Breast epithelium (tissue), 4 donors: ENCODE measurements at regions of chr20 and their contacts with region 1.

Region 1: GRCh38 chr20:56925082-56925830 is 296.1 kb downstream of the TFAP2C start:
- DNase-seq: no peak
- H3K4me3 ChIP-seq: peak overlapping the region in 2 of 3 donors; percentile 51 to 59
- H3K27ac ChIP-seq: no peak overlapping the region
- H3K4me1 ChIP-seq: no peaks in the 10 kb centered on the region
- H3K27me3 ChIP-seq: peaks cover 0 to 54% of the 10 kb centered on the region in 2 donors
- CTCF ChIP-seq: no peak
- POLR2A ChIP-seq: no peak

Region 2: GRCh38 chr20:56909918-56910714 is 15.1 kb before region 1 on chr20:
- intact Hi-C with region 1: no loop called
- DNase-seq: no peak
- H3K4me3 ChIP-seq: no peak overlapping the region
- H3K27ac ChIP-seq: no peak overlapping the region
- H3K4me1 ChIP-seq: no peaks in the 10 kb centered on the region
- H3K27me3 ChIP-seq: no peaks in the 10 kb centered on the region
- CTCF ChIP-seq: no peak
- POLR2A ChIP-seq: no peak

Region 3: GRCh38 chr20:58109126-58109880 is 1184.0 kb after region 1 on chr20:
- intact Hi-C with region 1: loop called (anchors 10 kb)
- DNase-seq: no peak
- H3K4me3 ChIP-seq: no peak overlapping the region
- H3K27ac ChIP-seq: no peak overlapping the region
- H3K4me1 ChIP-seq: no peaks in the 10 kb centered on the region
- H3K27me3 ChIP-seq: no peaks in the 10 kb centered on the region
- CTCF ChIP-seq: no peak
- POLR2A ChIP-seq: no peak